CD4-positive, alpha-beta memory T cell (primary cell): ENCODE measurements at regions of chr20 and their contacts with region 1.

Region 1: GRCh38 chr20:31822421-31823330 is 3.5 kb downstream of the MYLK2 start:
- DNase-seq: peak; percentile 59 to 74 (median 63)
- H3K4me3 ChIP-seq: no peak overlapping the region
- H3K4me3 Mint-ChIP-seq: peak overlapping the region in 4 of 8 donors; percentile 20 to 52 (median 44)
- H3K27ac ChIP-seq: no peak overlapping the region
- H3K27ac Mint-ChIP-seq: peak overlapping the region in 1 of 7 donors; percentile 43
- H3K4me1 ChIP-seq: no peaks in the 10 kb centered on the region
- H3K4me1 Mint-ChIP-seq: peaks cover 0 to 7% (median 6%) of the 10 kb centered on the region in 4 donors
- H3K27me3 ChIP-seq: no peaks in the 10 kb centered on the region
- H3K27me3 Mint-ChIP-seq: peaks cover 0 to 2% of the 10 kb centered on the region in 2 donors

Region 2: GRCh38 chr20:31835977-31836852 is 13.5 kb after region 1 on chr20:
- CTCF ChIA-PET with region 1: interaction called, 23 read pairs
- POLR2A ChIA-PET with region 1: no interaction called
- intact Hi-C with region 1: no loop called
- DNase-seq: no peak
- H3K4me3 ChIP-seq: no peak overlapping the region
- H3K4me3 Mint-ChIP-seq: no peak overlapping the region
- H3K27ac ChIP-seq: no peak overlapping the region
- H3K27ac Mint-ChIP-seq: no peak overlapping the region
- H3K4me1 ChIP-seq: peaks cover 8% of the 10 kb centered on the region
- H3K4me1 Mint-ChIP-seq: peaks cover 1 to 9% (median 7%) of the 10 kb centered on the region in 4 donors
- H3K27me3 ChIP-seq: no peaks in the 10 kb centered on the region
- H3K27me3 Mint-ChIP-seq: no peaks in the 10 kb centered on the region

Region 3: GRCh38 chr20:31849455-31849925 is 26.8 kb after region 1 on chr20:
- CTCF ChIA-PET with region 1: interaction called, 47 read pairs
- POLR2A ChIA-PET with region 1: no interaction called
- intact Hi-C with region 1: loop called (anchors 1 kb)
- DNase-seq: no peak
- H3K4me3 ChIP-seq: no peak overlapping the region
- H3K4me3 Mint-ChIP-seq: no peak overlapping the region
- H3K27ac ChIP-seq: no peak overlapping the region
- H3K27ac Mint-ChIP-seq: no peak overlapping the region
- H3K4me1 ChIP-seq: no peaks in the 10 kb centered on the region
- H3K4me1 Mint-ChIP-seq: no peaks in the 10 kb centered on the region
- H3K27me3 ChIP-seq: no peaks in the 10 kb centered on the region
- H3K27me3 Mint-ChIP-seq: peaks cover 11 to 21% of the 10 kb centered on the region in 2 donors

Region 4: GRCh38 chr20:31856516-31856915 is 33.8 kb after region 1 on chr20:
- CTCF ChIA-PET with region 1: interaction called, 33 read pairs
- POLR2A ChIA-PET with region 1: no interaction called
- intact Hi-C with region 1: no loop called
- DNase-seq: no peak
- H3K4me3 ChIP-seq: no peak overlapping the region
- H3K4me3 Mint-ChIP-seq: no peak overlapping the region
- H3K27ac ChIP-seq: no peak overlapping the region
- H3K27ac Mint-ChIP-seq: no peak overlapping the region
- H3K4me1 ChIP-seq: peaks cover 12% of the 10 kb centered on the region
- H3K4me1 Mint-ChIP-seq: peaks cover 0 to 11% (median 0%) of the 10 kb centered on the region in 4 donors
- H3K27me3 ChIP-seq: peaks cover 29% of the 10 kb centered on the region
- H3K27me3 Mint-ChIP-seq: peaks cover 11 to 24% of the 10 kb centered on the region in 2 donors

Region 5: GRCh38 chr20:31951530-31952453 is 129.1 kb after region 1 on chr20 and contains the start of gene PDRG1:
- CTCF ChIA-PET with region 1: interaction called, 10 read pairs
- POLR2A ChIA-PET with region 1: no interaction called
- intact Hi-C with region 1: no loop called
- DNase-seq: peak; percentile 93 to 96 (median 96)
- H3K4me3 ChIP-seq: peak within 1 kb of the TSS; percentile 68 to 92
- H3K4me3 Mint-ChIP-seq: peak within 1 kb of the TSS; percentile 96 to 100 (median 98)
- H3K27ac ChIP-seq: peak within 1 kb of the TSS; percentile 79
- H3K27ac Mint-ChIP-seq: peak within 1 kb of the TSS; percentile 85 to 99 (median 98)
- H3K4me1 ChIP-seq: peaks cover 23% of the 10 kb centered on the region
- H3K4me1 Mint-ChIP-seq: peaks cover 22 to 36% (median 31%) of the 10 kb centered on the region in 4 donors
- H3K27me3 ChIP-seq: no peaks in the 10 kb centered on the region
- H3K27me3 Mint-ChIP-seq: peaks cover 12 to 13% of the 10 kb centered on the region in 2 donors
- total RNA-seq, gene PDRG1: 12.6 to 13.8 TPM

Region 6: GRCh38 chr20:32031007-32031958 is 208.6 kb after region 1 on chr20:
- CTCF ChIA-PET with region 1: interaction called, 21 read pairs
- POLR2A ChIA-PET with region 1: no interaction called
- intact Hi-C with region 1: loop called (anchors 1 kb)
- DNase-seq: peak; percentile 48 to 66 (median 55)
- H3K4me3 ChIP-seq: no peak overlapping the region
- H3K4me3 Mint-ChIP-seq: peak overlapping the region in 6 of 8 donors; percentile 17 to 57 (median 42)
- H3K27ac ChIP-seq: no peak overlapping the region
- H3K27ac Mint-ChIP-seq: no peak overlapping the region
- H3K4me1 ChIP-seq: no peaks in the 10 kb centered on the region
- H3K4me1 Mint-ChIP-seq: no peaks in the 10 kb centered on the region
- H3K27me3 ChIP-seq: peaks cover 3% of the 10 kb centered on the region
- H3K27me3 Mint-ChIP-seq: peaks cover 10 to 17% of the 10 kb centered on the region in 2 donors

Region 7: GRCh38 chr20:32091888-32092346 is 269.2 kb after region 1 on chr20:
- CTCF ChIA-PET with region 1: interaction called, 24 read pairs
- POLR2A ChIA-PET with region 1: no interaction called
- intact Hi-C with region 1: loop called (anchors 1 kb)
- DNase-seq: peak; percentile 60 to 71 (median 69)
- H3K4me3 ChIP-seq: no peak overlapping the region
- H3K4me3 Mint-ChIP-seq: peak overlapping the region in 1 of 8 donors; percentile 43
- H3K27ac ChIP-seq: no peak overlapping the region
- H3K27ac Mint-ChIP-seq: no peak overlapping the region
- H3K4me1 ChIP-seq: no peaks in the 10 kb centered on the region
- H3K4me1 Mint-ChIP-seq: peaks cover 0 to 4% (median 0%) of the 10 kb centered on the region in 4 donors
- H3K27me3 ChIP-seq: no peaks in the 10 kb centered on the region
- H3K27me3 Mint-ChIP-seq: peaks cover 3 to 4% of the 10 kb centered on the region in 2 donors